HAP-1 (cell line): ENCODE measurements at regions of chr5 and their contacts with region 1.

Region 1: GRCh38 chr5:173625696-173626504 is 9.4 kb upstream of the BOD1 start:
- DNase-seq: no peak
- H3K4me3 ChIP-seq: no peak overlapping the region
- H3K4me1 ChIP-seq: no peaks in the 10 kb centered on the region
- H3K27me3 ChIP-seq: no peaks in the 10 kb centered on the region

Region 2: GRCh38 chr5:173972925-173973615 is 347.2 kb after region 1 on chr5:
- in situ Hi-C with region 1: loop called (anchors 5 kb)
- DNase-seq: peak; percentile 72 to 87
- H3K4me3 ChIP-seq: peak overlapping the region; percentile 15
- H3K4me1 ChIP-seq: no peaks in the 10 kb centered on the region
- H3K27me3 ChIP-seq: peaks cover 2% of the 10 kb centered on the region; the same call in 1 of the 2 replicates

Region 3: GRCh38 chr5:174311531-174312269 is 685.8 kb after region 1 on chr5:
- in situ Hi-C with region 1: loop called (anchors 10 kb)
- DNase-seq: peak; percentile 44 to 86
- H3K4me3 ChIP-seq: peak overlapping the region; percentile 15
- H3K4me1 ChIP-seq: no peaks in the 10 kb centered on the region
- H3K27me3 ChIP-seq: no peaks in the 10 kb centered on the region